A673 (cell line): ENCODE measurements at regions of chr3 and their contacts with region 1.

Region 1: DNA sequence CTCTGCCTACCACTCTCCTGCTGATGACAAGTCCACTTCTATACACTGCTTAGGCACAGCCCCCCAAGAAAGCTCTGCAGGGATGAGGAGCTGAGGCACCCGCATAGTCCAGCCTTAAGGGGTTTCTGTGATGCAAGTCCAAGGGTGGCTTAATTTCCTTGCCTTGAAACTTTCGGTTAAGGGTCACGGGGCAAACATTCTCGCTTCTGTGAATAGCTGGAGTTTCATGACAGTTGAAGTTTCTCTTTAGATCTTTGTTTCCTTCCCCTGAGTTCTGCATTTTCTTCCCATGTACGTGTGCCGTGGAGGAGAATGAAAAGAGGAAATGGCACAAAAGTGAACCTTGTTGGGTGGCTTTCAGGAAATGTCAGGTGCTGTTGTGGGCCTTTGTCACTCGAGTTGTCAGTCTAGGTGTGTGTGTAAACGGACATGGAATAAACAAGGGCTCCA is 7.0 kb downstream of the GPR160 start:
- DNase-seq: no peak
- H3K4me3 ChIP-seq: no peak overlapping the region
- H3K27ac ChIP-seq: no peak overlapping the region
- H3K4me1 ChIP-seq: no peaks in the 10 kb centered on the region
- H3K27me3 ChIP-seq: no peaks in the 10 kb centered on the region
- CTCF ChIP-seq: no peak

Region 2: DNA sequence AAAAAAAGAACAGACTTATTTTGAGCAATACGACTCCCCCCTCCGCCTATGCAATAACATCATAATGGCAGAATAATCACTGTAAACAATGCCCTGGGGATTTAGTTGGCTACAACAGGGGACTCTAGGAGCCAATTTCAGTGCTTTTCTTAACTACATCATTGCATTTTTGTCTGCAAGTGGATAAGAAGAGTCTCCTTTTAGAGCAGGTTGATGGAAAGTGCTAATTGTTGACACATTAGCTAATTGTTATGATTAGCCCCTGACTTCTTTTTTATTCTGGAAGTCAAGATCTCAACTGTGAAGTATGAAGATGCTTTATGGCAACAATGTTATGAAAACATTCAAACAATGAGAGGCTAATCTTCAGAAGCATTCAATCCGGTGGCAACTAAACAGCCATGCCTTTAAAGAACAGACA is 502.5 kb before region 1 on chr3:
- CTCF ChIA-PET with region 1: no interaction called
- POLR2A ChIA-PET with region 1: no interaction called
- intact Hi-C with region 1: no loop called
- DNase-seq: no peak
- H3K4me3 ChIP-seq: no peak overlapping the region
- H3K27ac ChIP-seq: no peak overlapping the region
- H3K4me1 ChIP-seq: no peaks in the 10 kb centered on the region
- H3K27me3 ChIP-seq: peaks cover 4% of the 10 kb centered on the region
- CTCF ChIP-seq: no peak

Region 3: DNA sequence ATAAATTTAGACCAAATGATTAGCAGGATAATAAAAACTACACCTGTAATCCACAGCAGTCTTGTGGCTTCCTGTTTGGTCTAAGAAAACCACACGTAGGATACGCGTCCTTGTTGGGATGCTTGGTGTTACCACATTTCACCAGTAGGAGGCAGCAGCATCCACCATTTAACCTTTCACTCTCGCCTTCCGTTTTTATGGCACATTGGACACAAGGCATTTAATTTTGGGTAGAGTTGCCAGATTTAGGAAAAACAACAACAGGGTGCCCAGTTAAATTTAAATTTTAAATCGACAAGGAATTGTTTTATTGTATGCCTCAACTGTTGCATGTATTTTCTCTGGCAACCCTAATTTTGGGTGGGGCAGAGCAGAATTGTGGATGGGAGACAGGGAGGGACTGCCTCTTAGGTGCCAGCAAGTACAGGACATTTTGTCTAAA is 181.3 kb before region 1 on chr3:
- CTCF ChIA-PET with region 1: interaction called, 3 read pairs
- POLR2A ChIA-PET with region 1: no interaction called
- intact Hi-C with region 1: loop called (anchors 10 kb)
- DNase-seq: peak; percentile 79
- H3K4me3 ChIP-seq: no peak overlapping the region
- H3K27ac ChIP-seq: no peak overlapping the region
- H3K4me1 ChIP-seq: no peaks in the 10 kb centered on the region
- H3K27me3 ChIP-seq: no peaks in the 10 kb centered on the region
- CTCF ChIP-seq: peak; percentile 94

Region 4: DNA sequence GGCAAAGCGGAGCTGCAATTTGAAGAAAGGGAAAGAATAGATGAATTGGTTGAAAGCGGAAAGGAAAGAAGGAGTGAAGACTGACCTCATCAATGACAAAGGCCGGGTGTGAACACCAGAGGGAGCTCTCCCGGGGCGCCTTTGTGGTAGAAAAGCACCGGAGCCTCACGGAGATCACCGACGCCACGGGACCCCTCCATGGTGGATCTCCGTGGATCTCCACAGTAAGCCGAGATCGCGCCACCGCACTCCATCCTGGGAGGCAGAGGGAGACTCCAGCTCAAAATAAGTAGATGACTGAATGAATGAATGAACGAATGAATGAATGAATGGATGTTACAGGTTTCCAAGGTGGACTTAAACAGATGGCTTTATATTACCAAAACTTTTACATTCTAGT is 17.9 kb after region 1 on chr3:
- CTCF ChIA-PET with region 1: no interaction called
- POLR2A ChIA-PET with region 1: interaction called, 12 read pairs
- intact Hi-C with region 1: no loop called
- DNase-seq: no peak
- H3K4me3 ChIP-seq: no peak overlapping the region
- H3K27ac ChIP-seq: no peak overlapping the region
- H3K4me1 ChIP-seq: peaks cover 17% of the 10 kb centered on the region
- H3K27me3 ChIP-seq: no peaks in the 10 kb centered on the region
- CTCF ChIP-seq: peak; percentile 45

Region 5: DNA sequence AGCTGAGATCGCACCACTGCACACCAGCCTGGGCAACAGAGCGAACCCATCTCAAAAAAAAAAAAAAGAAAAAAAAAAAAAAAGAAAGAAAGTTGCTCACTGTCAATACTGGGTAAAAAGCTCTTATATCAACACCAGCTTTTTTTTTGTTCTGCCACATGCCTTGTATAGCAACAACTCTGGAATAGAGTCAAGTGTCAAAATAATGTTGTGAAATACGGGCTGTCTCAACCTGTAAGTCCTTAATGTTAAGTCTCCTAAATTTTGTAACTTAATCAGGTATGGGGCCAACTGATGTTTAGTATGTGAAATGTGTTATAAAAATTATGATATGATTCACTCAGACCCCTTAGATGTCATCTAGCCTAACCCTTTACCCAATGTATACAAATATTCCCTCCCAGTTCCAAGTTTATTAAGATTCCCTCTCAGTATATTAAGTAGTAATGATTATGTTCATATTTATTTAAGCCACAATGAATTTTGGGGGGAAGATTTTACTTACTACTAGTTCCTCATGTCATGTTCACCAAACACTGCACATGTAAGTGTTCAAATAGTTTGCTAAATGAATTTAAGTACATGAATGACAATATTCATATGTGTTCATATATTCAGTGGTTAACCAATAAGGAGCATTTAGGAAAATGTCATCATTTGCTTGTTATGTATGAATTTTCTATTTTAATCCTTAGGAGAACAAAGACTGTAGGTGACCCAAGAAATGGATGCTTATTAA is 45.2 kb after region 1 on chr3:
- CTCF ChIA-PET with region 1: no interaction called
- POLR2A ChIA-PET with region 1: no interaction called
- intact Hi-C with region 1: no loop called
- DNase-seq: no peak
- H3K4me3 ChIP-seq: no peak overlapping the region
- H3K27ac ChIP-seq: no peak overlapping the region
- H3K4me1 ChIP-seq: no peaks in the 10 kb centered on the region
- H3K27me3 ChIP-seq: no peaks in the 10 kb centered on the region
- CTCF ChIP-seq: no peak